ENCODE measurements at regions of chr10 and their contacts with region 1.

Region 1: DNA sequence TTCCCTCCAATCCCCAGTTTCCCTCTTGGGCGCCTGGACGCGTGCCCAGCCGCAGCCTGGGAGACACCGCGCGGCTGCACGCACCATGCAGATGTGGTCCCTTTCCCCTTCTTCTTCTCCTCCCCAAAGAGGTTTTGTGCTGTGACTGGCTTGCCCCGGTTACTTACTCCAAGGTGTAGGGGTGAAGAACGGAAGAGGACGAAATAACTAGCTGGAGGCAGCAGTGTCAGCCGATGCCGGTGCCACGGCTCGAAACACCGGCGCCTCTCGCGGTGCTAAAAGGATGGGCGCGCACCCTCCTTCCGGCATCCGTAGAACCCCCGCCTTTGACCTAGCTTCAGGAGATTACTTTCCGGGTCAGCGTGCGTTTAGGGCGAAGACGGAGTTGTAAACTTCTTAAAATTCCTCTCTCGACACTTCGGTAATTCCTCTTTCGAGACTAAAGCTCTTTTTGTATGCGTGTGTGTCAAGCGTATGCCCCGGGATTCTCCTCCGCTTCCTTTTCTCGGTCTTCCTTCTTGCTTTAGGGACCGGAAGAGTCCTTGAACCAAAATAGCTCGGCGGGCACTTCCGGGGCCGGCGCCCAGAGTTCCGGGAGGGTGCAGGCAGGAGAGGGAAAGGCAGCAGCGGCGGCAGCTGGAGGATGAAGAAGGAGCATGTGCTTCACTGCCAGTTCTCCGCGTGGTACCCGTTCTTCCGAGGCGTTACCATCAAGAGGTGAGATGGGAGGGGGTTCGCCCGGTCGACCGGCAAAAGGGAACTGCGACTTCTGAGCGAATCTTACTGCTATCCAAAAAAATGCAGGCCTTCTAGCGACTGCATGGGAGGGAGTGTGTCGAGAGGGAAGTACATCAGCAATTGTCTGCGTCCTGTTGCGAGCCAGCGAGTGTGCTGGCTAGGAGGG is at the starts of genes CDC123 and NUDT5:
- DNase-seq: peak; percentile 92
- ATAC-seq: peak; percentile 94
- H3K4me3 Mint-ChIP-seq: peak within 1 kb of the TSS; percentile 93
- H3K27ac Mint-ChIP-seq: peak within 1 kb of the TSS; percentile 98
- H3K4me1 Mint-ChIP-seq: peaks cover 55% of the 10 kb centered on the region
- H3K27me3 Mint-ChIP-seq: no peaks in the 10 kb centered on the region
- total RNA-seq, gene CDC123: 99.0 to 102 TPM
- total RNA-seq, gene NUDT5: 94.8 to 97.8 TPM

Region 2: GRCh38 chr10:11853468-11853867 is 342.4 kb before region 1 on chr10:
- CTCF ChIA-PET with region 1: no interaction called
- POLR2A ChIA-PET with region 1: no interaction called
- DNase-seq: no peak
- ATAC-seq: no peak
- H3K4me3 Mint-ChIP-seq: no peak overlapping the region
- H3K27ac Mint-ChIP-seq: no peak overlapping the region
- H3K4me1 Mint-ChIP-seq: no peaks in the 10 kb centered on the region
- H3K27me3 Mint-ChIP-seq: peaks cover 12% of the 10 kb centered on the region

Region 3: DNA sequence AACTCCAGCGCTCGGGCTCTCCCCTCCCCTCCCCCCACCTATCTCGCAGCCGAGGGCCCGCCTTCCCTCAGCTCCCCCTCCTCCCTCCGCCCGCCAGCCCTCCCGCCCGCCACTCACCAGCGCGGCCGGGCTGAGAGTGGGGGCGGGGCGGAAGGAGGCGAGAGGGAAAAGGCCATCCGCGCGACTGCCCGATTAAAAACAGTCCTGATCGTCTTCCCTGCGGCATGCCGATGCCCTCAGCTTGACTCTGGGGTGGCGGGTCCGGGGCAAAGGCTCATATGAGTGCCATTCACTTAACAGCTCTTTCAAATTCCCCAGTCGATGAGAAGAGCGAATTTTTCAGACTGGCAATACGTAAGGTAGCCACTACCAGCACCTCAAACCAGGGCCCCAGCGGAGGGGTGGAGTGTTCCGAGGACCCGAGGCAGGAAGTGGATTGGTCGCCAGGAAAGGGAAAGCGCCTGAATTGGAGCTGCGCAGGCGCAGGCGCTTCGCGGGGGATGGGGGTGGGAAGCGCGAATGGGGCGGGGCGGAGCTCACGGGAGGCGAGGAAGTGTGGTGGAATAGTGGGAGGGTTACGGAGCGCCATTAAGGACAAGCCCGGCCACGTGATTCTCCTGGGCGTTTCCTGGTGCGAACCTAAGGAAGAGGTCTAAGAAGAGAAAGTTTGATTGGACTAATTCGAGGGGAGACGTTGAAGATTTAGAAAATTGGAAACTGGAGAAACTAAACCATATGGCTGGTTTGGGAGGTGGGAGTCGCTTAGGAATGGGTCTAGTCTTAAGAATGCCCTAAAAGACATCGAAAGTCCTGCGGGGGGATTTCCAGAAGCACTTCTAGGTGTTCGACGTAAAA is 152.8 kb before region 1 on chr10 and contains the start of gene UPF2:
- CTCF ChIA-PET with region 1: no interaction called
- POLR2A ChIA-PET with region 1: interaction called, 15 read pairs
- DNase-seq: peak; percentile 97
- ATAC-seq: peak; percentile 91
- H3K4me3 Mint-ChIP-seq: peak within 1 kb of the TSS; percentile 90
- H3K27ac Mint-ChIP-seq: peak within 1 kb of the TSS; percentile 100
- H3K4me1 Mint-ChIP-seq: peaks cover 27% of the 10 kb centered on the region
- H3K27me3 Mint-ChIP-seq: peaks cover 3% of the 10 kb centered on the region
- total RNA-seq, gene UPF2: 32.7 to 33.3 TPM

Region 4: DNA sequence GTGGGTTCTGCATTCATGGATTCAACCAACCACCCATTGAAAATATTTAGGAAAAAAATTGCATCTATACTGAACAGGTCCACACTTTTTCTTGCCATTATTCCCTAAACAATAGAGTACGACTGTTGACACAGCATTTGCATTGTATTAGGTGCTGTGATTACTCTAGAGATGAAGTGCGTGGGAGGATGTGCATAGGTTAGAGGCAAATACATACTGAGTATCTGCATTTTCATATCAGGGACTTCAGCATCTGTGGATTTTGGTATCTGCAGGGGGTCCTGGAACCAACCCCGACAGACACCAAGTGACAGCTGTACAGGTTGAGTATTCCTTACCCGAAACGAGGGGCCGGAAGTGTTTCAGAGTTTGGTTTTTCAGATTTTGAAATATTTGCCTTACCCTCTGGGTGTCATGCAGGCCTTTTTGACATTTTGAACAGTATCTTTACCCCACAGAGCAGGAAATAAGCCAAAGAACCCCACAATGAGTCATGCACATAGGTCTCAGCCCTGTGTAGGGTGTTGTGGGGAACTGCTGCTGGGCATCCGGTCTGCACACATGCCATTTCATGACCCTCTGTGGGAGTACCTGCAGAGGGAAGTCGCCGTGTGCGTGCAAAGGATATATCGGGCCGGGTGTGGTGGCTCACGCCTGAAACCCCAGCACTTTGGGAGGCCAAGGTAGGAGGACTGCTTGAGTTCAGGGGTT is 14.6 kb before region 1 on chr10:
- CTCF ChIA-PET with region 1: interaction called, 12 read pairs
- POLR2A ChIA-PET with region 1: interaction called, 19 read pairs
- DNase-seq: peak; percentile 87
- ATAC-seq: peak; percentile 99
- H3K4me3 Mint-ChIP-seq: peak overlapping the region; percentile 27
- H3K27ac Mint-ChIP-seq: peak overlapping the region; percentile 96
- H3K4me1 Mint-ChIP-seq: peaks cover 44% of the 10 kb centered on the region
- H3K27me3 Mint-ChIP-seq: no peaks in the 10 kb centered on the region

Region 5: GRCh38 chr10:12214763-12215218 is 18.9 kb after region 1 on chr10:
- CTCF ChIA-PET with region 1: interaction called, 102 read pairs
- POLR2A ChIA-PET with region 1: interaction called, 9 read pairs
- DNase-seq: peak; percentile 65
- ATAC-seq: peak; percentile 42
- H3K4me3 Mint-ChIP-seq: peak overlapping the region; percentile 34
- H3K27ac Mint-ChIP-seq: peak overlapping the region; percentile 85
- H3K4me1 Mint-ChIP-seq: peaks cover 14% of the 10 kb centered on the region
- H3K27me3 Mint-ChIP-seq: no peaks in the 10 kb centered on the region